ENCODE measurements at regions of chr2 and their contacts with region 1.

Region 1: DNA sequence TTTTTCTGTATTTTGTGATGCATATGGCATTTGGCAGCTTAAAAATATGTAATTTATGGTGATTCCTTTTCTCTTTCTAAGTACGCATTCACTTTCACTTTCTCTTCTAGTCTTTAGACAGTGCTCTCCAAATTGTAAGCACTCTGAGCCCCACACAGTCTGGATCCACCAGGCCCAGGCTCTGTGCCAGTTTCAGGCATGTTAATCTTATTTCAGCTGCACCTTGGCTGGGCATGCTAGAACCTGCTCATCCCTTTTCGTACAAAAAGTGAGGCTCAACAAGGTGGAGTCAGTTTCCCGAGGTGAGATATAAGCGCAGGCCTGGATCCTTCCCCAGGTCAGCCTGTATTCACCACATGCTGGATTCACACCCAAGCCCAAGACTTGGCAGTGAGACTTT is 203.9 kb downstream of the MTX2 start:
- DNase-seq: peak; percentile 97
- H3K4me3 Mint-ChIP-seq: peak overlapping the region; percentile 73
- H3K27ac Mint-ChIP-seq: peak overlapping the region; percentile 87
- H3K4me1 Mint-ChIP-seq: peaks cover 16% of the 10 kb centered on the region
- H3K27me3 Mint-ChIP-seq: no peaks in the 10 kb centered on the region
- CTCF ChIP-seq: no peak

Region 2: GRCh38 chr2:176461809-176462382 is 11.3 kb before region 1 on chr2:
- CTCF ChIA-PET with region 1: interaction called, 4 read pairs
- POLR2A ChIA-PET with region 1: interaction called, 18 read pairs
- intact Hi-C with region 1: no loop called
- DNase-seq: peak; percentile 73
- H3K4me3 Mint-ChIP-seq: no peak overlapping the region
- H3K27ac Mint-ChIP-seq: no peak overlapping the region
- H3K4me1 Mint-ChIP-seq: peaks cover 16% of the 10 kb centered on the region
- H3K27me3 Mint-ChIP-seq: no peaks in the 10 kb centered on the region
- CTCF ChIP-seq: no peak

Region 3: GRCh38 chr2:176484838-176485237 is 11.7 kb after region 1 on chr2:
- CTCF ChIA-PET with region 1: interaction called, 4 read pairs
- POLR2A ChIA-PET with region 1: interaction called, 32 read pairs
- intact Hi-C with region 1: no loop called
- DNase-seq: no peak
- H3K4me3 Mint-ChIP-seq: no peak overlapping the region
- H3K27ac Mint-ChIP-seq: no peak overlapping the region
- H3K4me1 Mint-ChIP-seq: no peaks in the 10 kb centered on the region
- H3K27me3 Mint-ChIP-seq: no peaks in the 10 kb centered on the region
- CTCF ChIP-seq: no peak

Region 4: DNA sequence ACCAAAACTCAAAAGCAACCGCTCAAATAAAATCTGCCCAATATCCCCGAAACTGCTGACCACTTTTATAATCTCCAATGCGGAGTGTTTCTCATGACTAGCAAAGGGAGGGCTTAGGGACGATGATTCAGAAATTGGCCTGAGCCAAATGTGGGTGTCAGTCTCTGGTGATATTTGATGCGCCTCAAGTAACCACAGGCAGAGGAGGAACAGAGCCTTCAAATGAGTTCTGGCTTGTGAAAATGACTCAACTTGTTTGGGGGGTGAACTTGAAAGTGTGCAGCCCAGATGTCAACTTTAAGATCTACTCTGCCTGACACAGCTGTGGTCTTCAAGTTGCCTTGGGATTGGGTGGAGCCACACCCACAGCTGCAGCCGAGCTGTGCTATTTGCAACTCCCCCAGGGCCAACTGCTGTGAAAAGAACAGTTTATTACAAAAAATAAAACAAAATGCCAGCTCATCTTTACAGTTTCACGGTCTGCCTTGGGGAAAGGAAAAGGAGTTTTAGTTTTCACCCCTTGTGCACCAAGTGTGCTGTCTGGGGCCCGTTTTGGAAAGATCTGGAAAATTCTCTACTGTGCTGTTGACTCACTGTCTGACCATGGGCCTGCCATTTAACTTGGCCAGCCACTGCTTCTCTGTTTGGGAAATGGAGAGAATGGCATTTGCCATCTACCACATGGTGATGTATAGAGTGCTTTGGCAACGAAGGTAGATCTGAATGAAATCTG is 18.2 kb after region 1 on chr2:
- CTCF ChIA-PET with region 1: interaction called, 4 read pairs
- POLR2A ChIA-PET with region 1: interaction called, 32 read pairs
- intact Hi-C with region 1: no loop called
- DNase-seq: peak; percentile 99
- H3K4me3 Mint-ChIP-seq: peak overlapping the region; percentile 55
- H3K27ac Mint-ChIP-seq: peak overlapping the region; percentile 90
- H3K4me1 Mint-ChIP-seq: peaks cover 54% of the 10 kb centered on the region
- H3K27me3 Mint-ChIP-seq: no peaks in the 10 kb centered on the region
- CTCF ChIP-seq: no peak

Region 5: DNA sequence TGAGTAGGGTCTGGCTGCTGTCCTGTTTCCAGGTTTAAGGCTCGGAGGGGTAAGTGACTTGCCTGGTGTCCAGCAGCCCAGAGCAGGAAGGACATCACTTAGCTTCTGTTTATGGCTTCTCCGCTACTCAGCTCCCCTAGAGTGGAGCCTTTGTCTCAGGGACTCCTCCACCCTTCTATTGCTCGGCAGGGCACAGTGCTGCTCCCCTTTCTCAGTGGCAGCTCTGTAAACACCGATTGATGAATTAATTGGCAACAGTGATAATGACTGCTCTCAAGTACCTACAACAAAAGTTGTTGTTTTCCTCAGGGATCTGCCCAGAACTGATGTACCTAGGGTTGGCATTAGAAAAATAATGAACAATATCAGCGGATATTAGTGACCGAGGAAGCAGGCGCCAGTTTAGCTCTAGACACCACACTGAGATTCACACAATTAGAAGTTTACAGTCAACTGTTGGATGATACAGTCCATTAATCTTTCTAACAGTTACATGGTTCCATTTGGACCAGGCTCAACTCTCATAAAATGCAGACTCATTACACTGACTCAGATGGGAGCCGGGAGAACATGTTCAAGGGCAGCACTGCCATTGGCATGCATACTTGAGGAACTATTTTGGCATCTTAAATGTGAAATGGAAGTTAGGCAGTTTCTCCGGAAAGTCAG is 61.8 kb after region 1 on chr2:
- CTCF ChIA-PET with region 1: no interaction called
- POLR2A ChIA-PET with region 1: interaction called, 16 read pairs
- intact Hi-C with region 1: no loop called
- DNase-seq: peak; percentile 34
- H3K4me3 Mint-ChIP-seq: no peak overlapping the region
- H3K27ac Mint-ChIP-seq: no peak overlapping the region
- H3K4me1 Mint-ChIP-seq: peaks cover 37% of the 10 kb centered on the region
- H3K27me3 Mint-ChIP-seq: no peaks in the 10 kb centered on the region
- CTCF ChIP-seq: no peak

Region 6: GRCh38 chr2:176669398-176670174 is 196.4 kb after region 1 on chr2:
- CTCF ChIA-PET with region 1: no interaction called
- POLR2A ChIA-PET with region 1: no interaction called
- intact Hi-C with region 1: no loop called
- DNase-seq: no peak
- H3K4me3 Mint-ChIP-seq: no peak overlapping the region
- H3K27ac Mint-ChIP-seq: no peak overlapping the region
- H3K4me1 Mint-ChIP-seq: peaks cover 4% of the 10 kb centered on the region
- H3K27me3 Mint-ChIP-seq: no peaks in the 10 kb centered on the region
- CTCF ChIP-seq: no peak

Region 7: DNA sequence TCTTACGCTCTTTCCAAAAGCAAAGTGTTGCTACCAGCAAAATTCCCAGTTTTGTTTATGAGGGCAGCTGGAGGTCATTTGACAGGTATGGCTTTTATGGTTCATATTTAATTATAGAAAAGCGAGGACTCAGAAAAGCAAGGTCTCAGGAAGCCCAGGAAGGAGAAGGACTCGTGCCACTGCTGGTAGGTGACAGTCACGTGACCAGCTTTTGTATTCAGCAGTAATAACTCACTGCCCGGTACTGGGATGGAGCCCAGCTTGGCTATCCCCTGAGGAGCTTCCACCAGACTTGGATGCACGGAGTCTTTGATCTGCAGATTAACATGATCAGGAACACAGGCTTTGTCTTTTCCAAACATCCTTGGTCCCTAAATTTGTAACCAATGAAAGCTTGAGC is 487.5 kb after region 1 on chr2:
- CTCF ChIA-PET with region 1: no interaction called
- POLR2A ChIA-PET with region 1: no interaction called
- intact Hi-C with region 1: no loop called
- DNase-seq: no peak
- H3K4me3 Mint-ChIP-seq: no peak overlapping the region
- H3K27ac Mint-ChIP-seq: no peak overlapping the region
- H3K4me1 Mint-ChIP-seq: no peaks in the 10 kb centered on the region
- H3K27me3 Mint-ChIP-seq: peaks cover 100% of the 10 kb centered on the region
- CTCF ChIP-seq: no peak

Measured in MCF 10A (cell line).